ENCODE measurements at regions of chr19 and their contacts with region 1.

Region 1: DNA sequence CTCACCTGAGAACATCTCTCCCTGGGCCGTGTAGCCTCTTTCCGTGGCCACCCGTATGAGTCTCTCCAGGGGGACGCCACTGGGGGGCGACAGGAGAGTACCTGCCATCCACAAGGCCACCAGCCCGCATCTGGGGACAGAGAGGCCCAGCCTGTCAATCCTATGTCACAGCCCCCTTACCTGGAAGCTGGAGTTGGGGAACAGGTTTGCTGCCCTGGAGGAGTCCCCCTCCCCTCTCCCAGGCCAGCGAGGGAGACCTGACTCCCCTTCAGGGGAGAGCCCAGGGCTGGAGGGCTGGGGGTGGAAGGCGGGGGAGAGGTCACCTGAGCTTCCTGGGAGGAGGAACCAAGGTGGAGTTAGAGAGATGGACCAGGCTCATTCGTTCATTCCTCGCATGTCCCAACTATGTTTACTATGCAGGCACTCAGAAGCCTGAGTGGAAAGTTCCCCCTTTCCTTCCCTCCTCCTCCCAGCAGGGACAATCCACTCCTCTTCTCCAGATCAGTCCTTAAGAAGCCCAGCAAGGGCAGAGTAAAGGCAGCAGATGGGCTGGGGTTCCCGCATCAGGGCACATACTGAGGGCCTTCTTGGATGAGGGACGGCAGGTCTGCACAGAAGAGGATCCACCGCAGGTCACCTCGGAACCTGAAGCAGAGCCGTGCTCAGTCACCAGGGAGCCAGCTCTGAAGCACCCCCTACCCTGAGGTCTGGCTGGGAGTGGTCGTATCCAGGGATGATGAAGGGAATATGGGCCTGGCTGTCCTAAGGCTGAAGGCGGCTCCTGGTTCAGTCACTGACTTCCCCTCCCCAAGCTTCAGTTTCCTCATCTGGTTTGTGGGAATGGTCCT is 5.5 kb downstream of the ACTMAP start:
- DNase-seq: no peak
- ATAC-seq: no peak

Region 2: DNA sequence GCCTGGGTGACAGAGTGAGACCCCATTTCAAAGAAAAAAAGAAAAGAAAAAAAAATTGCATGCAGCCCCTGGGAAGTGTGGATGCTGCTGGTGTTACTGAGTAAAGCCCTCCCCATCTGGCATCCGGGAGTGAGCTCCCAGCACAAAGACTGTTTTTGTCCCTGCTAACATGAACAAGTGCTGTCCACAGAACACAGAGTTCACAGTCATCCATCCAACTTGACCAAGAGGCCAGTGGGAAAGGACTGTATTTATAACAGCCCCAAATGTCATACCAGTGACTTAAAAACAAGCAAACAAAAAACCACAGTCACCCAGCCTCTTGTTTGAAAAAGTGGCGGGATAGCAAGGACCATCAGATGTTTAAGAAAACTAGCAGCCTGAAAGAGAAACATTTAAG is 1780.0 kb before region 1 on chr19:
- intact Hi-C with region 1: loop called (anchors 5 kb)
- DNase-seq: no peak
- ATAC-seq: no peak

Measured in sciatic nerve (tissue), 2 donors.